ENCODE measurements at regions of chr1 and their contacts with region 1.

Region 1: DNA sequence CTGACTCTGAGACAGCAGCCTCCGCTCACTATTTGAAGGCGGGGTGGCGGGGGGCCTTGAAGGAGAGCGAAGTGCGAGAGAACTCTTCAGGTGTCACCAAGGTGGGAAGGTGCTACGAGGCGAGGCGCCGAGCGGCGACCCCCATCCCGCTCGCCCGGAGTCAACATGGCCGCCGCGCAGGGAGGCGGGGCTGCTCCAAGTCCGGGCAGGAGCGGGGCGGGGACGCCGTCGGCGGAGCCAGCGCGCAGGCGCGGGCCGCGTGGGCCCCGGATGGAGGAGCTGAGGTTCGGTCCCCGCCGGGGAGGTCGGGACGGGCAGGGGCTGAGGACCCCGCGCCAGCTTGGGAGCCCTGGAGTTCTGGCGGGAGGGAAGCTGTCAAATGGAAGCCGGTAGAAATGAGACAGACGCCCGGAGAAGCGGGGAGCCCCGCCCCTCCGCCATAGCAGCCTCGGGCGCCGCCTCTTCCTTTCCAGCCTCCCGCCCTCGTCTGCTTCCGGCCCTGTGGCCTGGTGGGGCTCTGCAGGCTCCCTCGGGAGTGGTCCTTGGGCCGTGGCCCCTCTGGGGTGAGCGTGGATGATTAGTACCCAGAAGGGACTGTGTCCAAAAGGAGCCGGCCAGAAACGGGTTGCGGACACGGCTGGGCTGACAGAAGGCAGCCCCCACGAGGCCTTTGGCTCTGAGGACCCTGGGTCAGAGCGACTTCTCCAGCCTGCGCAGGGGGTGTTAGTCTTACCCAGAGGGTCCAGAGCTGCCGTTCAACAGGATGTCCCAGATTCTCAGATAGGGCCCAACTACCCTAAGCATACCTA is at the start of gene PIGV:
- DNase-seq: peak; percentile 87 to 92 (median 89)
- H3K4me3 ChIP-seq: peak within 1 kb of the TSS; percentile 87 to 88
- H3K4me3 Mint-ChIP-seq: peak within 1 kb of the TSS; percentile 98 to 100 (median 99)
- H3K27ac ChIP-seq: peak within 1 kb of the TSS; percentile 90
- H3K27ac Mint-ChIP-seq: peak within 1 kb of the TSS; percentile 99 to 100 (median 100)
- H3K4me1 ChIP-seq: peaks cover 79% of the 10 kb centered on the region
- H3K4me1 Mint-ChIP-seq: peaks cover 58 to 83% (median 72%) of the 10 kb centered on the region in 4 donors
- H3K27me3 ChIP-seq: no peaks in the 10 kb centered on the region
- H3K27me3 Mint-ChIP-seq: no peaks in the 10 kb centered on the region
- total RNA-seq, gene PIGV: 17.7 to 18.2 TPM

Region 2: DNA sequence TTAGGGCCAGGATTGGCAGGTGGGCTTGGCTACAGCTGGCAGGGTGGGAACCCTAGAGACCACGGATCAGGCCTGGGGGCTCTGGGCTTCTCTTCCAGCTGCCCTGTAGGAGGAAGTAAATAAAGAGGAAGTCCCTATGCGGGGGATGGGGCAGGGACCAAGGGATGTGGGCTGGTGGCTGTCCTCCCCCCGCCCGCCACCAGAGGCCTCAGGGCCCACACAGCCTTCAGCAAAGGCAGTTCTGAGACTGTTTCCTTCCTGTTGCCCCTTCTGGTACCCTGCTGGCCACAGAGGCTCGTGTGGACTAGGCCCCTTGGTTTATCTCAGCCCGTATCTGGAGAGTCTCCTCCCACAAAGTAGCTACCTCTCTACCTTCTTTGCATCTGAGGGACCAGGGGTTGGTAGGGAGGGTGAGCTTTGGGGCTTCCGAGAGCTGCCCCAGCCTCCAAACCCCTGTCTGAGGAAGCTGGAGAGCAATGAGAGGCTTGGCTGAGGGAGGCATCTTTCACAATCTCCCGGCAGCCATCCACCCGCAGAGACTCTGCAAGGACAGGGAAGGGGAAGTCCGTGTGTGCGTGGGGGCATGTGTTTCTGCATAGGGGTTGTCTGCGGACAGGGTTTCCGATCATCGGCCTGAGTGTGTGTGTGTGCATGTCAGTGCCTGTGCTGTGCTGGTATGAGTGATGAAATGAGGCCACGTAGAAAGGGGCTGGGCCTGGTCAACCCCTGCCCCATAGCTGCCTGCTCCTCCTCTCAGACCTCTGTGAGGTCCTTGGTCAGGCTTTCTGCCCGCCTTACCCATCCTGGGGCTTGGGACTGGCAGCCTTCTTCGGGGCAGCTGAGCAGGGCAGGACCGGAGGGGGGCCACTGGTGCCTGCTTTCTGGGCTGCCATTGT is 245.8 kb before region 1 on chr1:
- CTCF ChIA-PET with region 1: interaction called, 29 read pairs
- POLR2A ChIA-PET with region 1: interaction called, 8 read pairs
- intact Hi-C with region 1: no loop called
- DNase-seq: peak; percentile 70 to 90 (median 71)
- H3K4me3 ChIP-seq: peak overlapping the region; percentile 12 to 34
- H3K4me3 Mint-ChIP-seq: peak overlapping the region; percentile 78 to 89 (median 84)
- H3K27ac ChIP-seq: peak overlapping the region; percentile 75
- H3K27ac Mint-ChIP-seq: peak overlapping the region; percentile 94 to 98 (median 95)
- H3K4me1 ChIP-seq: peaks cover 97% of the 10 kb centered on the region
- H3K4me1 Mint-ChIP-seq: peaks cover 61 to 96% (median 84%) of the 10 kb centered on the region in 4 donors
- H3K27me3 ChIP-seq: no peaks in the 10 kb centered on the region
- H3K27me3 Mint-ChIP-seq: no peaks in the 10 kb centered on the region

Region 3: GRCh38 chr1:26695356-26696118 is 92.4 kb before region 1 on chr1 and contains the start of gene ARID1A:
- CTCF ChIA-PET with region 1: interaction called, 88 read pairs
- POLR2A ChIA-PET with region 1: interaction called, 595 read pairs
- intact Hi-C with region 1: loop called (anchors 1 kb)
- DNase-seq: peak; percentile 96 to 98 (median 97)
- H3K4me3 ChIP-seq: peak within 1 kb of the TSS; percentile 87 to 96
- H3K4me3 Mint-ChIP-seq: peak within 1 kb of the TSS; percentile 88 to 98 (median 94)
- H3K27ac ChIP-seq: peak within 1 kb of the TSS; percentile 76
- H3K27ac Mint-ChIP-seq: peak within 1 kb of the TSS; percentile 94 to 98 (median 96)
- H3K4me1 ChIP-seq: peaks cover 52% of the 10 kb centered on the region
- H3K4me1 Mint-ChIP-seq: peaks cover 19 to 35% (median 29%) of the 10 kb centered on the region in 4 donors
- H3K27me3 ChIP-seq: no peaks in the 10 kb centered on the region
- H3K27me3 Mint-ChIP-seq: no peaks in the 10 kb centered on the region
- total RNA-seq, gene ARID1A: 112 to 127 TPM

Region 4: DNA sequence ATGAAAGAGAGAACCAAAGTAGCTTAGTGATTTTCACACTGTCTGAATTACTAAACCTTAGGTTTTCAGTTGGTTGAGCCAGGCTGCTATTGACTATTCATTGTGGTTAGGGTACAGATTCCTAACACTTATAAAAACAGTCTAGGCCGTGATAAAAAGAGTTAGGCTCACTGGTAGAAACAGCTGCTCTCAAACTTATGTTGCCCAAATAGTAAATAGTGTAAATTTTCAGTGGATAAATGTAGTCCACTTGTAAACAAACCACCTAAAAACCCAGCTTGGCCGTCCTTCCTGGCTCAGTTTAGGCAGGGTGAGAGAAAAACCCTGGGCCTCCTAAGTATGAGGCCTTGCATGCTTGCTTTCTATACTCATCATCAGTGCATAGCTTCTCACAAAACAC is 57.2 kb before region 1 on chr1:
- CTCF ChIA-PET with region 1: interaction called, 17 read pairs
- POLR2A ChIA-PET with region 1: interaction called, 23 read pairs
- intact Hi-C with region 1: no loop called
- DNase-seq: no peak
- H3K4me3 ChIP-seq: no peak overlapping the region
- H3K4me3 Mint-ChIP-seq: no peak overlapping the region
- H3K27ac ChIP-seq: no peak overlapping the region
- H3K27ac Mint-ChIP-seq: peak overlapping the region; percentile 23 to 94 (median 56)
- H3K4me1 ChIP-seq: peaks cover 65% of the 10 kb centered on the region
- H3K4me1 Mint-ChIP-seq: peaks cover 57 to 89% (median 75%) of the 10 kb centered on the region in 4 donors
- H3K27me3 ChIP-seq: no peaks in the 10 kb centered on the region
- H3K27me3 Mint-ChIP-seq: no peaks in the 10 kb centered on the region

Region 5: GRCh38 chr1:26799479-26800142 is 11.7 kb after region 1 on chr1:
- CTCF ChIA-PET with region 1: interaction called, 35 read pairs
- POLR2A ChIA-PET with region 1: interaction called, 58 read pairs
- intact Hi-C with region 1: no loop called
- DNase-seq: no peak
- H3K4me3 ChIP-seq: no peak overlapping the region
- H3K4me3 Mint-ChIP-seq: peak overlapping the region in 7 of 8 donors; percentile 49 to 83 (median 79)
- H3K27ac ChIP-seq: peak overlapping the region; percentile 30
- H3K27ac Mint-ChIP-seq: peak overlapping the region; percentile 91 to 97 (median 92)
- H3K4me1 ChIP-seq: peaks cover 35% of the 10 kb centered on the region
- H3K4me1 Mint-ChIP-seq: peaks cover 26 to 38% (median 32%) of the 10 kb centered on the region in 4 donors
- H3K27me3 ChIP-seq: no peaks in the 10 kb centered on the region
- H3K27me3 Mint-ChIP-seq: no peaks in the 10 kb centered on the region

Region 6: GRCh38 chr1:26864610-26865527 is 77.0 kb after region 1 on chr1:
- CTCF ChIA-PET with region 1: no interaction called
- POLR2A ChIA-PET with region 1: interaction called, 31 read pairs
- intact Hi-C with region 1: loop called (anchors 2 kb)
- DNase-seq: peak; percentile 93 to 95 (median 93)
- H3K4me3 ChIP-seq: peak overlapping the region; percentile 86 to 91
- H3K4me3 Mint-ChIP-seq: peak overlapping the region; percentile 93 to 99 (median 96)
- H3K27ac ChIP-seq: peak overlapping the region; percentile 75
- H3K27ac Mint-ChIP-seq: peak overlapping the region; percentile 86 to 97 (median 94)
- H3K4me1 ChIP-seq: peaks cover 30% of the 10 kb centered on the region
- H3K4me1 Mint-ChIP-seq: peaks cover 8 to 31% (median 23%) of the 10 kb centered on the region in 4 donors
- H3K27me3 ChIP-seq: no peaks in the 10 kb centered on the region
- H3K27me3 Mint-ChIP-seq: no peaks in the 10 kb centered on the region

Region 7: DNA sequence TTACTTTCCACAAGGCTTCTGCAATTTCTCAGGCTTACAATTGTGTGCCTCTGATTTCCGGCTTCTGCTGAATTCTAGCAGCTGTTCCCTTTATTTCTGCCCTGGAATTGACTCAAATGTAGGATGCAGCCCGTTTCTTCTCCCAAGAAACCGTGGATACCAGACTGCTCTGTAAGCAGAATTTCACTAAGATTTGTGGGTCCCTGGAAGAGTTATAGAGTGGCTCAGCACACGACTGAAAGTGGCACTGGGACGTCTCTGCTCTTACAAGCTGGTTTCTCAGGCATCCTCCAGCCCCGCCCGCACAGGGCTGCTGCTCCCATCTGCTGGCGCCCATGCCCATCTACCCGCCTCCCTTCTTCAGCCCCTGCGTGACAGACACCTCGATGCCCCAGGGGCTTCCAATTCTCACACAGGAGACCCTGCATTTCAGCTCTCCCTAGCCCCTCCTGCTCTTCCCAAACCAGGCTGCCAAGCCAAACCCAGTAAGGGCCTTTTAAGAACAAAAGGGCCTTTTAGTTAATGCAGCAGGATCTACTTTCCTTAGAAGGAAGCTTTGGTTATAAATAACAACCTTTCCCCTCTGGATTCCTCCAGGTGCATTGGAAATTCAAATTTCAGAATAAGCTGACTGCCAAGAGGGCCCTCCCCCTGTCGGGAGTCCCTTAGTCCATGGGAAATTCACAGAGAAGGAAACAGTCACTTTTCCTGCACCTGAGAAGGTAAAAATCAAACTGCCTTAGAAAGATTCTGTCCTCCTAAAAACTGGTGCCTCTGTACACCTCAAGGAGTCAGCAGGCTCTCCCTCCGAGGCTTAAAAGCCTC is 270.1 kb after region 1 on chr1:
- CTCF ChIA-PET with region 1: no interaction called
- POLR2A ChIA-PET with region 1: no interaction called
- intact Hi-C with region 1: no loop called
- DNase-seq: no peak
- H3K4me3 ChIP-seq: no peak overlapping the region
- H3K4me3 Mint-ChIP-seq: no peak overlapping the region
- H3K27ac ChIP-seq: no peak overlapping the region
- H3K27ac Mint-ChIP-seq: no peak overlapping the region
- H3K4me1 ChIP-seq: no peaks in the 10 kb centered on the region
- H3K4me1 Mint-ChIP-seq: no peaks in the 10 kb centered on the region
- H3K27me3 ChIP-seq: no peaks in the 10 kb centered on the region
- H3K27me3 Mint-ChIP-seq: no peaks in the 10 kb centered on the region

Region 8: GRCh38 chr1:27087371-27088220 is 299.7 kb after region 1 on chr1:
- CTCF ChIA-PET with region 1: no interaction called
- POLR2A ChIA-PET with region 1: no interaction called
- intact Hi-C with region 1: no loop called
- DNase-seq: no peak
- H3K4me3 ChIP-seq: no peak overlapping the region
- H3K4me3 Mint-ChIP-seq: no peak overlapping the region
- H3K27ac ChIP-seq: no peak overlapping the region
- H3K27ac Mint-ChIP-seq: no peak overlapping the region
- H3K4me1 ChIP-seq: no peaks in the 10 kb centered on the region
- H3K4me1 Mint-ChIP-seq: peaks cover 0 to 10% (median 3%) of the 10 kb centered on the region in 4 donors
- H3K27me3 ChIP-seq: no peaks in the 10 kb centered on the region
- H3K27me3 Mint-ChIP-seq: no peaks in the 10 kb centered on the region

Measured in CD4-positive, alpha-beta memory T cell (primary cell).